IMR-90 (cell line): ENCODE measurements at regions of chr9 and their contacts with region 1.

Region 1: DNA sequence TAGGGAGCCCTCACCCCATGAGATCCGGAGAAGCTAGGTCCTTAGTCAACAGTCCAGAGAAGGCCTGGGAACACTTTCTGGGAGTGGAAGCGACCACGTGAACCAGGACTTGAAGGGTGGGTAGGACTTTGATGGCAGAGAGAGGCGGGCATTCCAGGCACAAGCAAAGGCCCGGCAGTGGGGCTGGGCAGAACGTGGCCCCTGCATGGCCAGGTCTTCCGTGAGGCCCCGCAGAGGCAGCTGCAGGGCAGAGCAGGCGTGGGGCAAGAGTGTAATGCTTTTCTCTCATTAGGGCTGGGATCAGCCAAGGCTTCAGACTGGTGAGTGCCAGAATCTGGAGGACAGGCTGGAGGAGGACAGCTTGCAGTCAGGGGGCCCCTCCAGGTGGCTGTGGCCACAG is 184.1 kb downstream of the PAX5 start:
- DNase-seq: no peak
- ATAC-seq: no peak
- H3K4me3 ChIP-seq: no peak overlapping the region
- H3K27ac ChIP-seq: no peak overlapping the region
- H3K4me1 ChIP-seq: no peaks in the 10 kb centered on the region
- H3K27me3 ChIP-seq: peaks cover 50% of the 10 kb centered on the region
- CTCF ChIP-seq: no peak
- POLR2A ChIP-seq: no peak
- RAD21 ChIP-seq: no peak

Region 2: DNA sequence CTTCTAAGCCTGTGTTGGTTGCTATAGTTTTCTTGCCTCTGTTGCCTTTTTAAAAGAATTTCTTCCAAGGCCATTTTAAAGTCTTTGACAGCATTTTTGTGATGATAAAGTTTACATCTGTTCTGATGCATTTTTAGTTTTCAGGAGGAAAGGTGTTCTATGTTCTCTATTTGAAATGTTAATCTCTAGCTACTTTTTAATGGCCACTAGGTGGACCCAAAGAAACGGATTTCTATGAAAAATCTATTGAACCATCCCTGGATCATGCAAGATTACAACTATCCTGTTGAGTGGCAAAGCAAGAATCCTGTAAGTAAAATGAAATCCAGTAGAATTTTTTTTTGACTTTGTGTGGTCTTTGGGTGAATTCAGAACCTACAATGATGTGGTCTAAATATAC is 217.1 kb before region 1 on chr9:
- CTCF ChIA-PET with region 1: no interaction called
- POLR2A ChIA-PET with region 1: no interaction called
- dilution Hi-C with region 1: no loop called
- in situ Hi-C with region 1: no loop called
- intact Hi-C with region 1: loop called (anchors 5 kb)
- DNase-seq: peak; percentile 51
- ATAC-seq: peak; percentile 53
- H3K4me3 ChIP-seq: no peak overlapping the region
- H3K27ac ChIP-seq: no peak overlapping the region
- H3K4me1 ChIP-seq: no peaks in the 10 kb centered on the region
- H3K27me3 ChIP-seq: no peaks in the 10 kb centered on the region
- CTCF ChIP-seq: peak; percentile 56
- POLR2A ChIP-seq: no peak
- RAD21 ChIP-seq: peak; percentile 53

Region 3: GRCh38 chr9:36891341-36891959 is 41.5 kb after region 1 on chr9:
- CTCF ChIA-PET with region 1: no interaction called
- POLR2A ChIA-PET with region 1: no interaction called
- dilution Hi-C with region 1: no loop called
- in situ Hi-C with region 1: no loop called
- intact Hi-C with region 1: no loop called
- DNase-seq: no peak
- ATAC-seq: no peak
- H3K4me3 ChIP-seq: no peak overlapping the region
- H3K27ac ChIP-seq: no peak overlapping the region
- H3K4me1 ChIP-seq: no peaks in the 10 kb centered on the region
- H3K27me3 ChIP-seq: peaks cover 41% of the 10 kb centered on the region
- CTCF ChIP-seq: no peak
- POLR2A ChIP-seq: no peak
- RAD21 ChIP-seq: no peak